ENCODE measurements at regions of chr2 and their contacts with region 1.

Region 1: GRCh38 chr2:205934443-205934842 is 151.5 kb downstream of the INO80D start:
- DNase-seq: no peak

Region 2: DNA sequence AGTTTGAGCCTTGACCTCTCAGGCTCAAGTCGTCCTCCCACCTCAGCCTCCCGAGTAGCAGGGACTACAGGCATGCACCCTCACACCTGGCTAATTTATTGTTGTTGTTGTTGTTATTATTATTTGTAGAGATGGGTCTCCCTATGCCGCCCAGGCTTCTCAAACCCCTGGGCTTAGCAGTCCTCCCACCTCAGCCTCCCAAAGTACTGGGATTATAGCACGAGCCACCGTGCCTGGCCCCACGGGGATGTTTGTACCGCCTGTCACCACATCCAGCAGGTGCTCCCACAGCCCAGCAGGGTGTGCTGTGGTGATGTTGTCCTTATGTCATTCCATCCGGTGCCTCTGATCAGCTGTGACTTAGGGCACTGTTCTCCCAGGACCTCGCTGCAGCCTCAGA is 30.8 kb before region 1 on chr2:
- CTCF ChIA-PET with region 1: no interaction called
- POLR2A ChIA-PET with region 1: no interaction called
- DNase-seq: peak; percentile 53

Region 3: DNA sequence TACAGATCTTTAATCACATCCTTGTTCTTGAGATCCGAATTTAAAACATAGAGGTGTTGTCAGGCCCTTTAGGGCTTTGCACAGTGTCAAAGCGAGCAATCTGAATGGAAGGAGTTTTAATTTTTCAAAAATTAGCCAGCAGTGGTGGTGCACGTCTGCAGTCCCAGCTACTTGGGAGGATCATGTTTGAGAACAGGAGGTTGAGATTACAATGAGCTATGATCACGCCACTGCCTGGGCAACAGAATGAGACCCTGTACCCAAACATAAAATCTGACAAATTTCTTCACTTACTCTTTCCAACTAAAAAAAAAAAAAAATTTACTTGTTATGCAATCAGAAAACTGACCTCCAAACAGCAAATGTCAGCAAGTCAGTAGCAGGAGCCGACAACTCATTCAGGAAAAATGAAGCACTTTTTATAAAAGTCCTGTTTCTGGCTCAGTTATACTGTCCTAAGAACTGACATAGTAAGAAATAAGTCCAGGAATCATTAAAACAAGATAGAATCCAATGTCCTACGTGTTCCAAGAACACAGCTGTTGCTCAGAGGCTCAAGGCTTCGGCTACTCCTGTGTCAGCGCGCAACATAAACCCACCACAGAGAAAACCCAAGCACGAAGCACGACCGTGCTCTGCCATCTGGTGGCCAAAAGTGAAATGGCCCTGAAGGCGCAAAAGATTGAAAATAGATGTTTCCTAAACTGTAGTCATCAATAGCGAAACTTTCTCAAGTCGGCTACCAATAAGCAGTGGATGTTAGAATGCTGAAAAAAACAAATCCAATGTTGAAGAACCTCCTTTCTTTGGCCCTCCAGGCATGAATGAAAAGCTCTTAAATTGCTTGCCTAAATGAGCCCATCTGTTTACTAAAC is 13.4 kb after region 1 on chr2:
- CTCF ChIA-PET with region 1: interaction called, 13 read pairs
- POLR2A ChIA-PET with region 1: no interaction called
- DNase-seq: peak; percentile 76